RWPE1 (cell line): ENCODE measurements at regions of chr1 and their contacts with region 1.

Region 1: GRCh38 chr1:54488779-54489626 is 59.0 kb upstream of the ACOT11 start:
- DNase-seq: peak; percentile 93
- H3K27ac ChIP-seq: peak overlapping the region; percentile 89
- CTCF ChIP-seq: peak; percentile 91

Region 2: GRCh38 chr1:54121482-54122134 is 367.4 kb before region 1 on chr1:
- CTCF ChIA-PET with region 1: interaction called, 12 read pairs
- POLR2A ChIA-PET with region 1: no interaction called
- DNase-seq: peak; percentile 77
- H3K27ac ChIP-seq: no peak overlapping the region
- CTCF ChIP-seq: peak; percentile 78

Region 3: DNA sequence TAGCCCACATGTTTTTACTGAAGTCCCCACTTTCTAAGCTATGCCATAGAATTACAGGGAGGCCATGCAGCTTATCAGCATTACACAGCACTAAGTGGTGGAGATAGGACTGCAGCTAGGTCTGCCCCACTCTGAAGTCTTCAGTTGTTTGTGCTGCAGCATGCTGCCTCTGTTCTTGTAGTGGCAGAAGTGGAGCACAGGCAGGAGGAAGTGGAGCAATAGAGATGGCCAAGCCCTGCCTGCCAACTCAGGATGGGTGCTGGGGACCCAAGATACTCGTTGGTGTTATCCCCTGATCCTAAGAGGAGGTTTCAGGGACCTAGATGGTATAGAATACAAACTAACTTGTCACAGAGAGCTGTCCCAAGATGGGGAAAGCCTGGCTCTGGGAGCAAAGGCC is 276.1 kb before region 1 on chr1:
- CTCF ChIA-PET with region 1: interaction called, 10 read pairs
- POLR2A ChIA-PET with region 1: no interaction called
- DNase-seq: no peak
- H3K27ac ChIP-seq: no peak overlapping the region
- CTCF ChIP-seq: no peak

Region 4: DNA sequence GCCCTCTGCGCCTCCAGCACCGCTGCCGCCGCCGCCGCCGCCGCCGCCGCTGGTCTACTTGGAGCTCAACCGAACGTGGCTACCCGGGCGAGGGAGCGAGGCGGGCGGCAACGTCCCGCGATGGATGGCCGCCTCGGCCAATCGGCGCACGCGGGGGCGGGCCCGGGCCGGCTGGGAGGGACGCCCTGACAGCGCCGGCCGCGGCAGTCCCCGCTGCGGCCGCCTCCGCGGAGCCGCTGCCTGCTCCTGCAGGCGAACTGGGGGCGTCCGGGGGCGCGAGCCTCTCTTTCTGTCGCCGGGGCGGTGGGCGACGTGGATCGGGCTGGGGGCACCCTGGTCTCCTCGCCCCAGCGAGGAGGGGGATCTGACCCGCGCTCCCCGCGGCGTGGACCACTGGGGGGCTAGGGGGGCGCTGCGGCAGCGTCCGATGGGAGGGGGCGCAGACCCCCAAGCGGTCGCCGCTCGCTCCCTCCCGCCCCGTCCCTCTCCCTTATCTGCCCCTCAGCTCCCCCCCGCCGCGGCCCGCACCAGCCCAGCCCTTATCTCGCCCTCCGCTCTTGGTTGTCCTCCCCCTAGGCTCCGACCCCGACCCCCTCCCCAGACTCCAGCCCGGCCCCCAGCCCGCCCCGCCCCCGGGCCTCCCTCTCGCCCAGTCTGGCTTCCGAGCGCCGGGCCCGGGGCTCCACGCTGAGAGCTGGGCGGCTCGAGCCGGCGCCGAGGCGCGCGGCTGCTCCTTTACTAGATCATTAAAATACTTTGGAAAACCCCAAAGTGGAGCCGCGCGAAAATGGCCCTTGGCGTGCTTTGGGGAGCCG is 82.5 kb before region 1 on chr1 and contains the start of gene SSBP3:
- CTCF ChIA-PET with region 1: interaction called, 18 read pairs
- POLR2A ChIA-PET with region 1: no interaction called
- DNase-seq: peak; percentile 97
- H3K27ac ChIP-seq: peak within 1 kb of the TSS; percentile 96
- CTCF ChIP-seq: no peak